ENCODE measurements at regions of chr6 and their contacts with region 1.

Region 1: DNA sequence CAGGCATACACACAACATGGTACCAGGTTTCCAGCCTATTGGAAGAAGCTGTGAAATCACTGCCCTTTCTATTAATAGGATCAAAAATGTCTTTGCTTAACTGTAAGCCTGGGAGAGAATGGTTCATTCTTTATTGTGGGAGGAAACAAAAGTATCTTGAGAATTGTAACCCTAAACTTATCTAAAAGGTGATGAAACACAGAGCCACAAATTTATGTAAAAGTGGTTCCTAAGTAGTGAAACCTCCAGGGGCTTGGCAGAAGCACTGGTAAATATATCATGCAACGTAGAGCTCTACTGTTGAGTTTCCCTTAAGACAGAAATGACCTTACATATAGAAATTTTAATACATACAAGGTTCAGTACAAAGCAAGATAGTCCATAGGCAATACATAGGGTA is 17.2 kb upstream of the NOX3 start:
- DNase-seq: no peak
- ATAC-seq: no peak
- H3K4me3 ChIP-seq: no peak overlapping the region
- H3K27ac ChIP-seq: no peak overlapping the region
- H3K4me1 ChIP-seq: no peaks in the 10 kb centered on the region
- H3K27me3 ChIP-seq: no peaks in the 10 kb centered on the region
- CTCF ChIP-seq: no peak

Region 2: GRCh38 chr6:155493694-155494143 is 20.8 kb after region 1 on chr6:
- CTCF ChIA-PET with region 1: no interaction called
- POLR2A ChIA-PET with region 1: no interaction called
- in situ Hi-C with region 1: no loop called
- intact Hi-C with region 1: loop called (anchors 1 kb)
- DNase-seq: peak; percentile 89
- ATAC-seq: peak; percentile 98
- H3K4me3 ChIP-seq: no peak overlapping the region
- H3K27ac ChIP-seq: peak overlapping the region; percentile 49; the same call in 1 of the 2 replicates
- H3K4me1 ChIP-seq: peaks cover 5% of the 10 kb centered on the region; the same call in 1 of the 2 replicates
- H3K27me3 ChIP-seq: no peaks in the 10 kb centered on the region
- CTCF ChIP-seq: no peak